Activated naive CD4-positive, alpha-beta T cell treated with anti-CD3 and anti-CD28 coated beads, Interleukin-2, amount 10 ng/mL, durations not matched to agents 7 days and 5 days (primary cell): ENCODE measurements at regions of chr15 and their contacts with region 1.

Region 1: DNA sequence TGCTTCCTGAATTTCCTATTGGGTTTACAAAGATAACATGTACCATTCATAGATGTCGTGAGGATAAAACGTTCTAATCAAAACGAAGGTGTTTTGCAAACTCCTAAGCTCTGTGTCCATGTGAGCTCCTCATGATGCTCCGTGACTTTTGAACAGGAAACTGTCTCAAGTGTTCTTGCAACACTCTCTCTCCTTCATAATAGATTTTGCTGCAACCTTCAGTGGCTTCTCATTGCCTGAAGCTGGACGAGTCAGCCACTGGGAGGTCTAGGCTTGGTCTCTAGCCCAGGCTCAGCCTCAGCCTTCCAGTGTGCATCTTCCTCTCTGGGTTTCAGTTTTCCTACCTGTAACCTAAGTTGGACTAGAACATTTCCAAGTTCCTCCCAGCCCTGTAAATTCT is 18.7 kb upstream of the BCL2A1 start:
- DNase-seq: no peak
- H3K4me3 Mint-ChIP-seq: no peak overlapping the region
- H3K27ac Mint-ChIP-seq: no peak overlapping the region
- H3K4me1 Mint-ChIP-seq: peaks cover 3% of the 10 kb centered on the region
- H3K27me3 Mint-ChIP-seq: peaks cover 21% of the 10 kb centered on the region

Region 2: GRCh38 chr15:79853458-79854328 is 136.0 kb before region 1 on chr15:
- CTCF ChIA-PET with region 1: interaction called, 24 read pairs
- DNase-seq: peak; percentile 70
- H3K4me3 Mint-ChIP-seq: no peak overlapping the region
- H3K27ac Mint-ChIP-seq: no peak overlapping the region
- H3K4me1 Mint-ChIP-seq: peaks cover 12% of the 10 kb centered on the region
- H3K27me3 Mint-ChIP-seq: no peaks in the 10 kb centered on the region

Region 3: DNA sequence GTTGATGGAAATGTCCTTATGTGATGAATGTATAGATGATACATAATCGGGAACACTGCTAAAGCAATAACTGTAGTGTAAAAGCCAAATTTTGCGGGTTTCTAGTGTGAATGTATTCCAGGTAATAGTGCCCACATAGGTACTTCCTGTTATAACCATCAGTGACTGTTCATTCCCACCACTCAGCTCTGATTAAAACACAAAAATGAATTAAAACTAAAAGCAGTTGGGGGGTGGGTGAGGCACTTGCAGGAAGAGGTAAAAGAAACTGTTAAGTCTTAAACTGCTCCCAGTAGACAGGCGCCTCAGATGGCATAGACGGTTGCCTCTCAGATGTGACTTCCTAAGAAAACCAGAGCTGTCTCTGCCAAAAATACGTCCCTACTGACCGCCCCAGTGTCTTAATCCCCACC is 92.0 kb before region 1 on chr15:
- CTCF ChIA-PET with region 1: interaction called, 15 read pairs
- DNase-seq: peak; percentile 37
- H3K4me3 Mint-ChIP-seq: peak overlapping the region; percentile 79
- H3K27ac Mint-ChIP-seq: peak overlapping the region; percentile 97
- H3K4me1 Mint-ChIP-seq: peaks cover 48% of the 10 kb centered on the region
- H3K27me3 Mint-ChIP-seq: no peaks in the 10 kb centered on the region

Region 4: DNA sequence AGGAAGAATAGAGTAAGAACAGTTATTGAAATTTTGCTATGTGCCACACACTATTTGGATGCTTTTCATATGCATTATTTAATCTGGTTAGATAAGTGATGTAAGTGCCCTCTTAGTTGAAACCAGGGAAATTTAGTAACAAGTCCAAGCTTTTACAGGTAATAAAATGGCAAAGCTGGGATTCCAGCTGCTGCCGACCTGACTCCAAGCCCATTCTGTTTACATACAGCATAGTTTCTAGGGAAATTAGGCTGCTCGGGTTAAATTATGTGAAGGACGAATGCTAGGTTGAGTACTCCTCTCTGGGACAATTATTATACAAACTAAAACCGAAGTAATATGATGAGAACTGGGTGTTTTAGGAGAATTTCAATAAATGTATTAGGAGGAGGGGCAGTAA is 124.4 kb after region 1 on chr15:
- CTCF ChIA-PET with region 1: no interaction called
- DNase-seq: no peak
- H3K4me3 Mint-ChIP-seq: no peak overlapping the region
- H3K27ac Mint-ChIP-seq: no peak overlapping the region
- H3K4me1 Mint-ChIP-seq: no peaks in the 10 kb centered on the region
- H3K27me3 Mint-ChIP-seq: no peaks in the 10 kb centered on the region